ENCODE measurements at regions of chr3 and their contacts with region 1.

Region 1: DNA sequence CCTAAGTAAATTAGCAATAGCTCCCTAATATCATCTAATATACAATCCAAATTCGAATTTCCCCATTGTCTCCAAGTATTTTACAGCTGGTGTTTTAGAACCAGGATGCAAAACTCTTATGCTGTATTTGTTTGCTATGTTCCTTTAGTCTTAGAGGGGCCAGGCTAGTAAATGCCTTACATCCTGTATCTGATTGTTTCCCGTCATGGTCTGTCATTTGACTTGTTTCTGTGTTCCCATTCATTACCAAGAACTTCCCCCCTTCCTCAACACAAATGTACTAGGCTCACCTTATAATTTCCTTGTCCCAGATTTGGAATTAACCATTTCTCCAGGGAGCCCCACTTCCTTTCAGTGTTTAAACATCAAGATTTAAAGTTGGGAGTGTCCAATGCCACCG is 54.1 kb downstream of the ABTB1 start:
- DNase-seq: no peak

Region 2: DNA sequence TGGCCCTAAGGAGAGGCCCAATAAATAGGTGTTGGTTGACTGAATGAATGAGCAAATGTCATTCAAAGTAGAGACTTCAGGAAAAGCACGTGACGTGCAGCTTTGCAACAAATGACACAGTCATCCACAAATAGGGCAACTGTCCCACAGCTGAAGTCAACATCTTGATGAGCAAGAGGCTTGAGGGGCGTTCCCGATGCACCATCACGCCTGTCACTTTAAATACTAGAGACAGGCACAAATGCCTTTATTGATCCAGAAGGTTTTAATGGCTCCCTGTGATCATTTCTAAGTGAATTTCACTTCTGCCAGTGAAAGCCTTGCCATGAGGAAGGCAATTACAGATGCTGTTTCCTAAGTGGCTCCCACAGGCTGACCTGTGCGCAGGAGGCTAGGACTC is 10.5 kb before region 1 on chr3:
- intact Hi-C with region 1: loop called in 1 of 2 experiments (anchors 1 kb)
- DNase-seq: no peak